GM12878 (cell line): ENCODE measurements at regions of chr7 and their contacts with region 1.

Region 1: DNA sequence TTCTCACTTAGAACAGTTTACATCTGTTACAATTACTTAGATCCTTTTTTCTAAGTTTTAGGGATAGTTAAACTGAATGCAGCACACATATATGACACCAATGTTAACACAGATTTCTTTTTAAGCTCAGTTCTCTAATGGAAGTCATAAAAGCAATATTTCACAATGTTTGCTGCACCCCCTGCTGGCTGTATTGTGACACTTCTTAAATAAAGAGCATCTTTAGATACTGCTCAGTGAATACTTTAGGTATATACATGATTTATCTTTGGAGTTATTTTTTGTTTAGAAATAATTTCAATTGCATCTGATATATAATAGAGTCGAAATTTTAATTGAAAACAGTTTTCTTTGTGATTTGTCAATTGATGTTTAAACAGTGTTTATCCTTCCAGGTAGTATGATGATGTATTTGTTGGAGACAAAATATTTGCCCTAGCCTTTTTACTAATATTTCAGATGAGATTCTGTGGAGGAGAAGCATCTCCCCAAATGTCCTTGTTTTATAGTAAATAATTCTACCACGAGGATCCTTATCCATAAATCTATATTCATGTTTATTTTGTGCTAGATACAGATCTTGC is 174.4 kb downstream of the ST7 start:
- DNase-seq: peak; percentile 23
- ATAC-seq: peak; percentile 82
- H3K4me3 ChIP-seq: no peak overlapping the region
- H3K27ac ChIP-seq: no peak overlapping the region
- H3K4me1 ChIP-seq: peaks cover 10% of the 10 kb centered on the region
- H3K27me3 ChIP-seq: no peaks in the 10 kb centered on the region
- CTCF ChIP-seq: peak; percentile 56 to 66 (median 64); a peak in 5 of 6 replicates
- EP300 ChIP-seq: no peak
- POLR2A ChIP-seq: no peak
- RAD21 ChIP-seq: peak; percentile 72

Region 2: GRCh38 chr7:116305485-116306408 is 821.9 kb before region 1 on chr7:
- CTCF ChIA-PET with region 1: no interaction called
- POLR2A ChIA-PET with region 1: no interaction called
- RAD21 ChIA-PET with region 1: no interaction called
- SMC1A ChIA-PET with region 1: no interaction called
- in situ Hi-C with region 1: no loop called
- intact Hi-C with region 1: no loop called
- DNase-seq: no peak
- ATAC-seq: no peak
- H3K4me3 ChIP-seq: no peak overlapping the region
- H3K27ac ChIP-seq: no peak overlapping the region
- H3K4me1 ChIP-seq: no peaks in the 10 kb centered on the region
- H3K27me3 ChIP-seq: 0 out of 4 replicates have a peak, but pooled peaks cover 0 to 3% of the 10 kb centered on the region in 2 experiments
- CTCF ChIP-seq: no peak
- EP300 ChIP-seq: no peak
- POLR2A ChIP-seq: no peak
- RAD21 ChIP-seq: no peak

Region 3: DNA sequence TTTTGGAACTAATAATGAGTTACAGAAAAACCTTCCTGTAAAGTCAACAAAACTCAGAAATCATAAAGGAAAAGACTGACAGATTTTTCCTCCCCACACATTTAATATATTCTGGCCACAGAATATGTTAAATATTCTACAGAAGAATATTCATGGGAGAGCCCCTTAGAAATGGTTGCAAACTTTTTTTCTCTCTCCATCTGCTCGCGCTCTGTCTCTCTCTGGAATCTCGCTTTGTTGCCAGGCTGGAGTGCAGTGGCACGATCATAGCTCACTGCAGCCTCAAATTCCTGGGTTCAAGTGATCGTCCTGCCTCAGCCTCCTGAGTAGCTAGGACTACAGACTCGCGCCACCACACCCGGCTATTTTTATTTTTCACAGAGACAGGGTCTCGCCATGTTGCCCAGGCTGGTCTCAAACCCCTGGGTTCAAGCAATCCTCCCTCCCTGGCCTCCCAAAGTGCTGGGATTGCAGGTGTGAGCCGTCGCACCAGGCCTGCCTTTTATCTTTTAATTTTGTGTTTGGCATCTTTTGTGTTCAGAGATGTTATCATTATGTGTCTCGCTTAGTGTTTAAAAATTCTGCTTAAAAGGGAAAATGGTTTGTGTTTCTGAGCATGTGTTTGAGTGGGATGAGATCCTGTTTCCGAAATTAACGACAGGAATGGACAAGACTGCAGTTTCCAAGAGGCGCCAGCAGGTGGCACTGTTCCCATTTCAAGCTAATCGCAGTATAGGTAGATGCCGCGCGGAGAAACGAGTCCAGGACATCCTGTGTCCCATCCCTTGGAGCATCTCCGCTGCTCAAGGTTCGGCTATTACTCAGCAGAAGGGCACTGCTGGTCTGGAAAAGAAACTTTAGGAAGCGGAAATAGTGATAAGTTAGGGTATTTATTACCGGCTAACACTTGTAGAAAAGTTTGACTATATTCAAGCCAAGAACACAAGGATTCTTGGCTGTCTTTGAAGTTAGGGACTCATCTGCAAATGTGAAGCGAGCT is 197.5 kb before region 1 on chr7:
- CTCF ChIA-PET with region 1: interaction called, 324 read pairs
- POLR2A ChIA-PET with region 1: interaction called, 21 read pairs
- RAD21 ChIA-PET with region 1: interaction called, 53 read pairs
- SMC1A ChIA-PET with region 1: interaction called, 262 read pairs
- in situ Hi-C with region 1: loop called (anchors 5 kb)
- intact Hi-C with region 1: loop called (anchors 1 kb)
- DNase-seq: peak; percentile 44
- ATAC-seq: peak; percentile 95
- H3K4me3 ChIP-seq: no peak overlapping the region
- H3K27ac ChIP-seq: no peak overlapping the region
- H3K4me1 ChIP-seq: peaks cover 5% of the 10 kb centered on the region
- H3K27me3 ChIP-seq: no peaks in the 10 kb centered on the region
- CTCF ChIP-seq: peak; percentile 83 to 95 (median 88)
- EP300 ChIP-seq: no peak
- POLR2A ChIP-seq: no peak
- RAD21 ChIP-seq: peak; percentile 99

Region 4: GRCh38 chr7:116953727-116954442 is 173.8 kb before region 1 on chr7:
- CTCF ChIA-PET with region 1: interaction called, 21 read pairs
- POLR2A ChIA-PET with region 1: interaction called, 5 read pairs
- RAD21 ChIA-PET with region 1: interaction called, 6 read pairs
- SMC1A ChIA-PET with region 1: interaction called, 26 read pairs
- in situ Hi-C with region 1: no loop called
- intact Hi-C with region 1: no loop called
- DNase-seq: no peak
- ATAC-seq: peak; percentile 21
- H3K4me3 ChIP-seq: peak overlapping the region; percentile 79
- H3K27ac ChIP-seq: peak overlapping the region; percentile 98
- H3K4me1 ChIP-seq: peaks cover 22% of the 10 kb centered on the region
- H3K27me3 ChIP-seq: no peaks in the 10 kb centered on the region
- CTCF ChIP-seq: no peak
- EP300 ChIP-seq: peak in 1 of 2 experiments; percentile 19; a peak in 1 of 4 replicates
- POLR2A ChIP-seq: peak; percentile 62
- RAD21 ChIP-seq: no peak

Region 5: DNA sequence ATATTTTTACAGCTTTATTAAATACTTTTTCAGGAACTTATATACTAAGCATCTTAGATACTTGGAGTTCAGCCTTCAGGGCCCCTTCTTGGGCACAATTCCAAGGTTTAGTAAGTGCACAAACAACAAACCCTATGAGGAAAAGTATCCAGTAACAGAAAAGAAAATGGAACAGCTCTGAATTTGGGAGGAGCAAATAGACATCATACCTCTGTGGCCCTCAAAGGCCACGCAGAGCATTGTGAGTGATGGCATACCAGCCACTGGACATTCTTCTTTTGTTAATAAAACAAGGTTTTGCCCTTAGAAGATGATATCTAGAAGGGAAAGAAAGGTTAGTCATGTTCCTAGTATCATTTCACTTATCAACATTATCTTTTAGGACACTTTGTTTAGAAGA is 128.4 kb before region 1 on chr7:
- CTCF ChIA-PET with region 1: interaction called, 9 read pairs
- POLR2A ChIA-PET with region 1: no interaction called
- RAD21 ChIA-PET with region 1: interaction called, 9 read pairs
- SMC1A ChIA-PET with region 1: interaction called, 17 read pairs
- in situ Hi-C with region 1: no loop called
- intact Hi-C with region 1: no loop called
- DNase-seq: no peak
- ATAC-seq: no peak
- H3K4me3 ChIP-seq: no peak overlapping the region
- H3K27ac ChIP-seq: no peak overlapping the region
- H3K4me1 ChIP-seq: no peaks in the 10 kb centered on the region
- H3K27me3 ChIP-seq: no peaks in the 10 kb centered on the region
- CTCF ChIP-seq: no peak
- EP300 ChIP-seq: no peak
- POLR2A ChIP-seq: no peak
- RAD21 ChIP-seq: no peak

Region 6: DNA sequence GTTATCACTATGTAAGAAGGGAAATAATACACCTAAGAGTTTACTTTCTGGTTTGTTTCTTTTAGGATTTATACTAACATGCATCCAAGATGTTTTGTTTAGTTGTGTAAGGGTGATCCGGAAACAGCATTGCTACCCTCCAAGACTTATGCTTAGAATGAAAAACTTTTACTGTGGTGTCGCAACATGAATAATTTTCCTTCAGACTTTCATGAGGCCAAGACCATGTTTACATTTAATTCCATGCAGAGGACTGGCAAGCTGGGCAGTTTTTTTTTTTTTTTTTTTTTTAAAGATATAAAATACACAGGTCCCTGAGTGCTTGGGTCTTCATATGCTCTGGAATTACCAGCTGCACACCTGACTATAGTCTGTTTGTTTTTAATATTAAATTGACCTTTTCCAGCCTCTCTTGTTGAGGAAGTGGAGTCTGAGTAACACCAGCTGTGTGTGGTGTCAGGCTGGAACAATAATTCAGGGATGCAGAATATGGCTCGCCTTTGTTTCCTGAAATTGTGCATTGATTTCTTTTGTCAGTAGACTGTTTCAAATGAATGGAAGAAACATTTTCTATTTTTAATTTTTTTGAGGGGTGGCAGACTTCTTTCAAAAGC is 92.7 kb before region 1 on chr7:
- CTCF ChIA-PET with region 1: interaction called, 14 read pairs
- POLR2A ChIA-PET with region 1: no interaction called
- RAD21 ChIA-PET with region 1: no interaction called
- SMC1A ChIA-PET with region 1: interaction called, 12 read pairs
- in situ Hi-C with region 1: no loop called
- intact Hi-C with region 1: no loop called
- DNase-seq: no peak
- ATAC-seq: no peak
- H3K4me3 ChIP-seq: no peak overlapping the region
- H3K27ac ChIP-seq: no peak overlapping the region
- H3K4me1 ChIP-seq: no peaks in the 10 kb centered on the region
- H3K27me3 ChIP-seq: no peaks in the 10 kb centered on the region
- CTCF ChIP-seq: no peak
- EP300 ChIP-seq: no peak
- POLR2A ChIP-seq: no peak
- RAD21 ChIP-seq: no peak

Region 7: DNA sequence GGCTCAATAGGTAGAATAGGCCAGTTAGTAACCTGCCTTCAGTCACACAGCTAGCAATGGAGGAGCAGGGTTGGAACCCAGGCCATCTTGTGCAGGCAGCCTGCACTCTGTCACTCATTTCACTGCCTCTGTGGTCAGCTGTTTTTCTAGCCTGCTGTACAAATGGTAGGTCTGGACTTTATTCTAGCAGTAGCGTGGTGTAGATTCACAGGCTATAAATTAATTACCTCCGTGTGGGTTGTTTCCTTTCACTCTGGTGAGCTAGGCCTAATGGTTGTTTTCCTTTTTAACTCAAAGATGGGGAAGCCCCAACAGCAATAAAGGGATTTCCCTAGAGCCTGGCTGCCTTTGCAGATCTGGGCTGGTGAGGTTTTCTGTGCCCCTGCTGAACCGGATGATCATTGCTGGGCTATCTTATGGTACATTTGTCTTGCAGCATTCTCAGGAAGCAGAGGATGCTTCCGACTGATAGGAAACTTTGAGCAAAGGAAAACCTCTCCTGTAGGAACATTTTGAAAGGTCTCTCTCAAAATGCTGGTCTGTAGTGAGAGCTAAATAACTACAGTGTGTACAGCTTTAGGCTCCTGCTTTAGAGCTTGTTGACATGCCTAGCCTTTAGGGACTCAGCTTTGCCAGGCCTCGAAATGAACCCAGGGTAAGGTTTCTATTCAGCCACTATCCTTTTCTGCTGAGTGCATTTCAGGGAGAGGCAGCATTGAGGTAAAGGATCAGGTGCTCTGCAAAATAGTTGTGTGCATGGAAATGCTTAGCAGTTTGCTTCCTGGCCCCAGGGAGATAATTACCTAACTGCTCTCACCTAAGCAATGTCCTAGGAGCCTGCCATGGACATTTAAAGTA is 17.0 kb before region 1 on chr7:
- CTCF ChIA-PET with region 1: interaction called, 49 read pairs
- POLR2A ChIA-PET with region 1: interaction called, 4 read pairs
- RAD21 ChIA-PET with region 1: interaction called, 29 read pairs
- SMC1A ChIA-PET with region 1: interaction called, 40 read pairs
- in situ Hi-C with region 1: no loop called
- intact Hi-C with region 1: no loop called
- DNase-seq: peak; percentile 70
- ATAC-seq: peak; percentile 97
- H3K4me3 ChIP-seq: peak overlapping the region; percentile 41
- H3K27ac ChIP-seq: peak overlapping the region; percentile 63
- H3K4me1 ChIP-seq: peaks cover 10% of the 10 kb centered on the region
- H3K27me3 ChIP-seq: no peaks in the 10 kb centered on the region
- CTCF ChIP-seq: no peak
- EP300 ChIP-seq: 0 out of 4 replicates have a peak, but pooled peaks of 1 of the 2 experiments have one; percentile 20
- POLR2A ChIP-seq: 0 out of 2 replicates have a peak, but pooled peaks have one; percentile 21
- RAD21 ChIP-seq: 0 out of 2 replicates have a peak, but pooled peaks have one; percentile 6

Region 8: GRCh38 chr7:117385340-117386109 is 257.8 kb after region 1 on chr7:
- CTCF ChIA-PET with region 1: interaction called, 14 read pairs
- POLR2A ChIA-PET with region 1: no interaction called
- RAD21 ChIA-PET with region 1: interaction called, 3 read pairs
- SMC1A ChIA-PET with region 1: interaction called, 3 read pairs
- in situ Hi-C with region 1: no loop called
- intact Hi-C with region 1: loop called (anchors 5 kb)
- DNase-seq: no peak
- ATAC-seq: peak; percentile 90
- H3K4me3 ChIP-seq: no peak overlapping the region
- H3K27ac ChIP-seq: no peak overlapping the region
- H3K4me1 ChIP-seq: no peaks in the 10 kb centered on the region
- H3K27me3 ChIP-seq: no peaks in the 10 kb centered on the region
- CTCF ChIP-seq: peak; percentile 25 to 68 (median 46); a peak in 4 of 6 replicates
- EP300 ChIP-seq: no peak
- POLR2A ChIP-seq: no peak
- RAD21 ChIP-seq: peak; percentile 75